Panc1 (cell line): ENCODE measurements at regions of chr18 and their contacts with region 1.

Region 1: GRCh38 chr18:76783759-76784484 is 38.4 kb upstream of the ZNF236 start:
- DNase-seq: no peak
- ATAC-seq: peak; percentile 23; the same call in 1 of the 2 replicates
- H3K4me3 ChIP-seq: no peak overlapping the region
- H3K27ac ChIP-seq: no peak overlapping the region
- H3K4me1 ChIP-seq: no peaks in the 10 kb centered on the region
- H3K27me3 ChIP-seq: peaks cover 10% of the 10 kb centered on the region; the same call in 1 of the 2 replicates
- CTCF ChIP-seq: no peak

Region 2: DNA sequence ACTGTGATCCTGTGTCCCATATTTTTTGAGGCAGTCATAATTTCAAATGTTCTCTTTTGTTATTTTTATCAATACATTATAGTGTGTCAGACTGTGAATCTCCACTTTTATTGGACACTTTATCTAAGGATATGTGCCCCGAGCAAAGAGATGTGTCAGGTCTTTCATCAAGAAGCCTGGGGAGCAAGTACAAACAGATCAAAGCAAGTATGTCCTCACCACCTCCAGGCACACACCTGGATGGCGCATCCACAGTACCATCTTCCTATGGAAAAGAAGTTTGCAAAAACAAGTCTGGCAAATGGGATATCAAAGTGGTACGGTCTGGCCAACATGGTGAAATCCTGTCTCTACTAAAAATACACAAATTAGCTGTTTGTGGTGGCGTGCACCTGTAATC is 42.6 kb before region 1 on chr18:
- CTCF ChIA-PET with region 1: no interaction called
- POLR2A ChIA-PET with region 1: interaction called, 14 read pairs
- in situ Hi-C with region 1: no loop called
- intact Hi-C with region 1: no loop called
- DNase-seq: no peak
- ATAC-seq: no peak
- H3K4me3 ChIP-seq: no peak overlapping the region
- H3K27ac ChIP-seq: no peak overlapping the region; the same call in 1 of the 2 replicates
- H3K4me1 ChIP-seq: peaks cover 13% of the 10 kb centered on the region
- H3K27me3 ChIP-seq: no peaks in the 10 kb centered on the region
- CTCF ChIP-seq: no peak

Region 3: DNA sequence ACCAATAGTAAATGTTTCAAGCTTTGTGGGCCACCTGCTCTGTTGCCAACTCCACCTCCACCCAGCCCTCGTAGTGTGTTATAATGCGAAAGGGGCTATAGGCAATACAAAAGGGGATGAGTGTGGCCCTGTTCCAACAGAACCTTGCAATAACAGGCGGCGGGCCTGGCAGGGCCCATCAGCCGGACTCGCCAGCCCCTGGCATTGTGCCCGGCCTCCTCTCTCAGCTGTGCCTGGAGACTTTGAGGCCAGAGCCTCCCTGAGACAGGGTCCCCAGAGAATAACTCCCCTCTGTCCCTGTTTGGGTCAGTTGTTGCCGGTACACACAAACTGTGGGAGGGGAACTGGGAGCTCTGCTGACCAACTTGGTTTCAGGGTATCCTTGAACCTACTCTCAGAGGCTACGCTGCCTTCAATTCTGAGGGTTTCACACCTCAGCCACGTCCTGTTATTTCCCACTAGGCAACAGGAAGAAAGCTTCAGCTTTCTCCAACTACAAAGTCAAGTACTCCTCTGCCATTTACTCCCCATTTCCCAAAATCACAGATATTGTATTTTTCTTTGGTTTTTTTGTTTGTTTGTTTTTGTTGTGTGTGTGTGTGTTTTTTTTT is 19.5 kb before region 1 on chr18:
- CTCF ChIA-PET with region 1: no interaction called
- POLR2A ChIA-PET with region 1: interaction called, 14 read pairs
- in situ Hi-C with region 1: no loop called
- intact Hi-C with region 1: no loop called
- DNase-seq: no peak
- ATAC-seq: no peak
- H3K4me3 ChIP-seq: no peak overlapping the region
- H3K27ac ChIP-seq: no peak overlapping the region
- H3K4me1 ChIP-seq: no peaks in the 10 kb centered on the region
- H3K27me3 ChIP-seq: no peaks in the 10 kb centered on the region
- CTCF ChIP-seq: no peak